ENCODE measurements at regions of chr3 and their contacts with region 1.

Region 1: DNA sequence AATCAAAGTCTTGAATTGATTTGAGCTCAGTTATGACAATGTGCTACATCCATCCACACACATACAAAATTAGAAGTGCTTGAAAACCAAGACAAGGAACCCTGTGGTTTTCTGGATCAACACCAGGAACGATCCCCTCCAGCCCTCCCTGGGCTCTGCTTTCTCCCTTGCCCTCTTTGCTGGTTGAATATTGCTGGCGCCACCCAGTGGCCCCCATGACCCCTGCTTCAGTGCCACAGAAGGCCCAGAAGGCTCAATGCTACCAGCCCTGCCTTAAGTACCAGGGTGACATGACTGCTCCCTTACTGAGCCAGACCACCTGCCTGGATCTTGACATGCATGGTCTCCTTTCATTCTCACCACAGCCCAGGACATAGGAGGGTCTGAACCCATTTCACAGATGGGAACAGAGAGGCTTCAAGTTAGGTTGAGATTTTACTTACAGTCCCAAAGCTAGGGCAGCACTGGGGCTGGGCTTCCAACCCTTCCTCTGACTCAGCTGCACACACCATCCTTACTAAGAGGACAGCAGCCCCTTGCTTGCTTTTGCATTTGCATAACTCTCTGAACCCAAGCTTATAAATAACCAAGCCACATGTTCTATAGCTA is 15.0 kb downstream of the IL12A start:
- DNase-seq: no peak
- H3K4me3 ChIP-seq: no peak overlapping the region
- H3K27me3 ChIP-seq: no peaks in the 10 kb centered on the region
- CTCF ChIP-seq: peak; percentile 63

Region 2: DNA sequence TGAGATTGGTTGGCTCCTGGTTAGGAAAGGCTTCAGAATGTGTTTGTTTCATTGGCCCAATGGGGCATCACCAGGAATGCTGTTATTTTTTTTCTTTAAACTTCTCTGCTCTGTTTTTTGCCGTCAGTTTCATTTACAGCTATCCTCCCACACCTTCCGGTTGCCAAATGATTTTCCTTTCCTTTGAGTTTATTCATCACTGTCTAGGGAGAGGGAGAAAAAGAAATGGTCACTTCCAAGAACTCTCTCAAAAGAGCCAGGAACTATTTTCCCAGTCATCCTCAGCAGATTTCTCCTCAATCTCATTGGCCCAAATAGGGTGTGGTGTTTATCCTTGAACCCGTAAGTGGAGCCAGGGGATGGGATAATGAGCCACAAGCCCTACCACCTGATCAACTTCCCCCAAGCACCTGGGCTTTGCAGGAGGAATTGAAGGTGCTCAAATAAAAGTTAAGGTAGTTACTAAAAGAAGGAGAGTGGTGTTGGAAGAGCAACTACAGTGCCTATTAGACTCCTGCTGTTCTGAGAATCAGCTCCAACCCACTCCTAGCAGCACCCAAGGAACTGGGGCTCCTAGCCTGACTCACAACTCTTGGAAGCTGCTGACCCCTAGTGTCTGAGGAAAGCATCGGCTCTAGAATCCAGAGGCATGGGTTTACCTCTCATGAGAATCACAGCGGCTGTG is 198.8 kb before region 1 on chr3:
- CTCF ChIA-PET with region 1: interaction called, 43 read pairs
- POLR2A ChIA-PET with region 1: no interaction called
- DNase-seq: no peak
- H3K4me3 ChIP-seq: no peak overlapping the region
- H3K27me3 ChIP-seq: no peaks in the 10 kb centered on the region
- CTCF ChIP-seq: peak; percentile 95

Region 3: DNA sequence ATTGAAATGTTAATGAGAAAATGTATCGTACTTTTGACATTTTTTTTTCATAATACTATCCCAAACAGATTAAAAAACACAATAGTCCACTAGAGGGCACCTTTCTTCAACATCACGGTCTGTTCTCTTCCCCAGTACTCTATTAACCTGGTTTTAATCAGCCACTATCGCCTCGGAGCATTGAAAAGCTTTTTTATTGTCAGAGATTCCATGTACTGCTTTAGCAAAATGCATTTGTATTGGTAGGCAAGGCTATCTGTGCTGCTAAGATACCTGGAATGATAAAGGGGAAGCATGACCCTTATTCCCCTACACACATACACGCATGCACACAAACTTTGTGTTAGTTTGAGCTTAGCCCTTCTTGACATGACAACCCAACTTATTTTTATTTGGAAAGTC is 175.1 kb before region 1 on chr3:
- CTCF ChIA-PET with region 1: interaction called, 45 read pairs
- POLR2A ChIA-PET with region 1: no interaction called
- DNase-seq: no peak
- H3K4me3 ChIP-seq: no peak overlapping the region
- H3K27me3 ChIP-seq: no peaks in the 10 kb centered on the region
- CTCF ChIP-seq: peak; percentile 36

Region 4: GRCh38 chr3:159884661-159885402 is 118.8 kb before region 1 on chr3:
- CTCF ChIA-PET with region 1: interaction called, 276 read pairs
- POLR2A ChIA-PET with region 1: no interaction called
- DNase-seq: no peak
- H3K4me3 ChIP-seq: no peak overlapping the region
- H3K27me3 ChIP-seq: no peaks in the 10 kb centered on the region
- CTCF ChIP-seq: peak; percentile 48

Region 5: GRCh38 chr3:159929435-159930141 is 74.0 kb before region 1 on chr3:
- CTCF ChIA-PET with region 1: interaction called, 64 read pairs
- POLR2A ChIA-PET with region 1: no interaction called
- DNase-seq: no peak
- H3K4me3 ChIP-seq: no peak overlapping the region
- H3K27me3 ChIP-seq: no peaks in the 10 kb centered on the region
- CTCF ChIP-seq: peak; percentile 56

Region 6: GRCh38 chr3:160020057-160020711 is 16.6 kb after region 1 on chr3:
- CTCF ChIA-PET with region 1: interaction called, 19 read pairs
- POLR2A ChIA-PET with region 1: no interaction called
- DNase-seq: no peak
- H3K4me3 ChIP-seq: no peak overlapping the region
- H3K27me3 ChIP-seq: peaks cover 2% of the 10 kb centered on the region
- CTCF ChIP-seq: no peak

Measured in BJ (cell line).